Right cardiac atrium (tissue), 5 donors: ENCODE measurements at regions of chr12 and their contacts with region 1.

Region 1: GRCh38 chr12:56206457-56207166 is 15.1 kb downstream of the RNF41 start:
- DNase-seq: peak; percentile 45 to 75 (median 71)
- ATAC-seq: peak; percentile 49 to 57
- H3K4me3 ChIP-seq: no peak overlapping the region
- H3K27ac ChIP-seq: no peak overlapping the region
- H3K4me1 ChIP-seq: no peaks in the 10 kb centered on the region
- H3K27me3 ChIP-seq: no peaks in the 10 kb centered on the region

Region 2: DNA sequence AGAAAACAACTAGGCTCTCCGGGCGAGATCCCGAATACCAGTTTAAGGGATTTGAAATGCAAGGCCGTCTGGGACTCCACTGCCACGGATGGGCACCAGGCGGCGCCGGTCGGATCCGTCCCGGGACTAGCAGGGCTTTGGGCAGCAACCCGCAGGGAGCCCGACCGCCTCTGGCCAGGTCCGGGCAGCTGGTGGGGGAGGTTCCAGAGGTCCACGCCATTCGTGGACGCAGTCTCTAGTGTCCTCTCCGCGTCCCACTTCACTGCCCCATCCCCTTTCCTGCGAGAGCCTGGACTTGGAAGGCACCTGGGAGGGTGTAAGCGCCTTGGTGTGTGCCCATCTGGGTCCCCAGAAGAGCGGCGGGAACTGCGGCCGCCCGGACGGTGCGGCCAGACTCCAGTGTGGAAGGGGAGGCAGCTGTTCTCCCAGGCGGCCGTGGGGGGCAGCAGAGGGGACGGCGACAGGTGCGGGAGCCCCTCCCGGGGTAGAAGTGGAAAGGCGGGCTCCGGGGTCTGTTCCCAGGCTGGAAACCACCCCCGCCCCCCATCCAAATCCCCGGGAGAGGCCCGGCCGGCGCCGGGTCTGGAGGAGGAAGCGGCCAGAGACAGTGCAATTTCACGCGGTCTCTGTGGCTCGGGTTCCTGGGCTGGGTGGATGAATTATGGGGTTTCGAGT is 127.5 kb before region 1 on chr12:
- intact Hi-C with region 1: no loop called
- DNase-seq: peak; percentile 87 to 94 (median 93)
- ATAC-seq: peak; percentile 88 to 92
- H3K4me3 ChIP-seq: peak overlapping the region; percentile 64
- H3K27ac ChIP-seq: peak overlapping the region; percentile 1
- H3K4me1 ChIP-seq: peaks cover 4% of the 10 kb centered on the region
- H3K27me3 ChIP-seq: no peaks in the 10 kb centered on the region

Region 3: GRCh38 chr12:56315622-56316473 is 109.2 kb after region 1 on chr12 and contains the start of gene CNPY2:
- intact Hi-C with region 1: loop called in 1 of 4 experiments (anchors 10 kb)
- DNase-seq: peak; percentile 98 to 99 (median 98)
- ATAC-seq: peak; percentile 97
- H3K4me3 ChIP-seq: peak within 1 kb of the TSS; percentile 72
- H3K27ac ChIP-seq: peak within 1 kb of the TSS; percentile 86
- H3K4me1 ChIP-seq: no peaks in the 10 kb centered on the region
- H3K27me3 ChIP-seq: no peaks in the 10 kb centered on the region
- total RNA-seq, gene CNPY2: 52.4 to 65.1 (median 55.1) TPM